ENCODE measurements at regions of chr1 and their contacts with region 1.

Region 1: GRCh38 chr1:205523891-205524793 is 19.7 kb downstream of the CDK18 start:
- DNase-seq: peak; percentile 71 to 87
- ATAC-seq: peak; percentile 65 to 81
- H3K4me3 ChIP-seq: no peak overlapping the region
- H3K27ac ChIP-seq: no peak overlapping the region
- H3K4me1 ChIP-seq: 0 out of 3 replicates have a peak, but pooled peaks cover 6% of the 10 kb centered on the region
- CTCF ChIP-seq: peak; percentile 91
- EP300 ChIP-seq: no peak
- POLR2A ChIP-seq: no peak
- RAD21 ChIP-seq: peak; percentile 95

Region 2: GRCh38 chr1:205273551-205273982 is 250.6 kb before region 1 on chr1:
- CTCF ChIA-PET with region 1: interaction called, 16 read pairs
- POLR2A ChIA-PET with region 1: no interaction called
- DNase-seq: peak; percentile 87 to 96
- ATAC-seq: peak; percentile 77 to 86
- H3K4me3 ChIP-seq: no peak overlapping the region
- H3K27ac ChIP-seq: peak overlapping the region; percentile 83 to 93
- H3K4me1 ChIP-seq: peaks cover 67% of the 10 kb centered on the region
- CTCF ChIP-seq: peak; percentile 98
- EP300 ChIP-seq: no peak
- POLR2A ChIP-seq: no peak
- RAD21 ChIP-seq: peak; percentile 99 to 100

Region 3: DNA sequence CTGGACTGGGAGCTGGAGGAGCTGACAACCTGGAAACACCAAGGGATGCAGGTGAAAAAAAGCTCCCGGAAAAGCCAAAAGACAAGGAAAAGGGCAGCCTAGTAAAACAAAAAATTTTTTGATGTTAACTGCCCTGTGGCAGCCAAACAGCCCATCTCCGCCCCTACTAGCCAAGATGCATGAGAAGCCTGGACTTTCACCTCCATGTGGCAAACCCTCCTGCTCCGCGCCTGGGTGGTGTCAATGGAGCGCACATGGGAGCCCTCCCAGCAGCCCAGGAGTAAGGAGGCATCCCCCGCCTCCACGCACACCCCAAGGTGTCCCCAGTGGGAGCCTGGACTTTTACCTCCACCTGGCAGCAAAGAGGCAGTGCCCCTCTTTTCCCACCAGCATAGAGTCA is 132.8 kb before region 1 on chr1:
- CTCF ChIA-PET with region 1: interaction called, 142 read pairs
- POLR2A ChIA-PET with region 1: no interaction called
- DNase-seq: no peak
- ATAC-seq: no peak
- H3K4me3 ChIP-seq: no peak overlapping the region
- H3K27ac ChIP-seq: no peak overlapping the region
- H3K4me1 ChIP-seq: no peaks in the 10 kb centered on the region
- CTCF ChIP-seq: no peak
- EP300 ChIP-seq: no peak
- POLR2A ChIP-seq: no peak
- RAD21 ChIP-seq: no peak

Region 4: DNA sequence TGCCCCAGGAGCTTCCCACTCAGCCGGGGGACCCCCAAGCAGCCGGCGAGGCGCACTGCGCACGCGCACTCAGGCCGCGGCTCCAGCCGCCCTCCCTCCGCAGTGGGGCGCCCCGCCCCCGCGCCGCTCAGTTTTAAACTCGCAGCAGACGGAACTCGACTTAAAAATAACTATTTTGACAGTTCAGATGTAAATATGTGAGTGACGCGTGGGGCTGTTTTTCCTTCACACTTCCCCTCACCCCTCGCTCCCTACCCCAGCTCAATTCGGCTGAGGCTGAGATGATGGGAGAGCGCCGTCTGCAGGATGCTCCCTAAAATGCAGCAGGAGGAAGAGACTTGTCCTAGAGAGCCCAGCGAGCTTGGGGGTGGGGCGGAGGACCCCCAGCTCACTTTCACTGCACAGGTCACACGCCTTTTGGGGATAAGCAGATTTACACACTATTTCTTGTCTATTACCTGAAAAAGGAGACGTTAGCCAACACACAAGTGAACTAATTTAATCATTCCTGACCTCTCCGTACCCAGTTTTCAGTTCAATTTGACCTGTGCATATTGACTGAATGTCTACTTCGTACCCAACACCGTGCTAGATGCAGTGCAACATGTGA is 93.3 kb before region 1 on chr1:
- CTCF ChIA-PET with region 1: interaction called, 22 read pairs
- POLR2A ChIA-PET with region 1: no interaction called
- DNase-seq: peak; percentile 44 to 60
- ATAC-seq: peak; percentile 79 to 88
- H3K4me3 ChIP-seq: peak overlapping the region; percentile 48
- H3K27ac ChIP-seq: peak overlapping the region; percentile 72 to 80
- H3K4me1 ChIP-seq: 0 out of 3 replicates have a peak, but pooled peaks cover 2% of the 10 kb centered on the region
- CTCF ChIP-seq: peak; percentile 99
- EP300 ChIP-seq: no peak
- POLR2A ChIP-seq: no peak
- RAD21 ChIP-seq: peak; percentile 79 to 88

Region 5: GRCh38 chr1:205477759-205478247 is 46.3 kb before region 1 on chr1:
- CTCF ChIA-PET with region 1: interaction called, 560 read pairs
- POLR2A ChIA-PET with region 1: no interaction called
- DNase-seq: peak; percentile 52 to 84
- ATAC-seq: peak; percentile 49 to 84
- H3K4me3 ChIP-seq: no peak overlapping the region
- H3K27ac ChIP-seq: peak overlapping the region; percentile 58 to 66; a peak in 4 of 6 replicates
- H3K4me1 ChIP-seq: peaks cover 17% of the 10 kb centered on the region
- CTCF ChIP-seq: no peak
- EP300 ChIP-seq: no peak
- POLR2A ChIP-seq: no peak
- RAD21 ChIP-seq: no peak

Region 6: GRCh38 chr1:205568469-205569361 is 44.6 kb after region 1 on chr1:
- CTCF ChIA-PET with region 1: interaction called, 17 read pairs
- POLR2A ChIA-PET with region 1: no interaction called
- DNase-seq: no peak
- ATAC-seq: peak; percentile 25 to 50; a peak in 3 of 6 replicates
- H3K4me3 ChIP-seq: peak overlapping the region; percentile 46
- H3K27ac ChIP-seq: peak overlapping the region in 1 of 2 experiments; percentile 56; a peak in 3 of 6 replicates
- H3K4me1 ChIP-seq: peaks cover 5% of the 10 kb centered on the region; the same call in 1 of the 3 replicates
- CTCF ChIP-seq: no peak
- EP300 ChIP-seq: no peak
- POLR2A ChIP-seq: no peak
- RAD21 ChIP-seq: no peak

Region 7: GRCh38 chr1:205791568-205792180 is 267.5 kb after region 1 on chr1:
- CTCF ChIA-PET with region 1: no interaction called
- POLR2A ChIA-PET with region 1: no interaction called
- DNase-seq: peak; percentile 49 to 83
- ATAC-seq: peak; percentile 96 to 99
- H3K4me3 ChIP-seq: no peak overlapping the region
- H3K27ac ChIP-seq: no peak overlapping the region
- H3K4me1 ChIP-seq: no peaks in the 10 kb centered on the region
- CTCF ChIP-seq: peak; percentile 90
- EP300 ChIP-seq: no peak
- POLR2A ChIP-seq: no peak
- RAD21 ChIP-seq: peak; percentile 95 to 98

Region 8: GRCh38 chr1:206128196-206128595 is 604.1 kb after region 1 on chr1:
- CTCF ChIA-PET with region 1: no interaction called
- POLR2A ChIA-PET with region 1: no interaction called
- DNase-seq: no peak
- ATAC-seq: no peak
- H3K4me3 ChIP-seq: no peak overlapping the region
- H3K27ac ChIP-seq: no peak overlapping the region
- H3K4me1 ChIP-seq: no peaks in the 10 kb centered on the region
- CTCF ChIP-seq: no peak
- EP300 ChIP-seq: no peak
- POLR2A ChIP-seq: no peak
- RAD21 ChIP-seq: no peak

Measured in A549 (cell line).